ENCODE measurements at regions of chr2 and their contacts with region 1.

Region 1: GRCh38 chr2:26122630-26123029 is 50.3 kb upstream of the GAREM2 start:
- DNase-seq: no peak
- ATAC-seq: peak in 3 of 4 donors; percentile 55 to 60 (median 57)
- H3K4me3 ChIP-seq: no peak overlapping the region
- H3K27ac ChIP-seq: peak overlapping the region in 11 of 12 donors; percentile 3 to 72 (median 39)
- H3K4me1 ChIP-seq: peaks cover 0 to 49% (median 18%) of the 10 kb centered on the region in 12 donors
- H3K27me3 ChIP-seq: no peaks in the 10 kb centered on the region
- CTCF ChIP-seq: no peak
- POLR2A ChIP-seq: no peak

Region 2: DNA sequence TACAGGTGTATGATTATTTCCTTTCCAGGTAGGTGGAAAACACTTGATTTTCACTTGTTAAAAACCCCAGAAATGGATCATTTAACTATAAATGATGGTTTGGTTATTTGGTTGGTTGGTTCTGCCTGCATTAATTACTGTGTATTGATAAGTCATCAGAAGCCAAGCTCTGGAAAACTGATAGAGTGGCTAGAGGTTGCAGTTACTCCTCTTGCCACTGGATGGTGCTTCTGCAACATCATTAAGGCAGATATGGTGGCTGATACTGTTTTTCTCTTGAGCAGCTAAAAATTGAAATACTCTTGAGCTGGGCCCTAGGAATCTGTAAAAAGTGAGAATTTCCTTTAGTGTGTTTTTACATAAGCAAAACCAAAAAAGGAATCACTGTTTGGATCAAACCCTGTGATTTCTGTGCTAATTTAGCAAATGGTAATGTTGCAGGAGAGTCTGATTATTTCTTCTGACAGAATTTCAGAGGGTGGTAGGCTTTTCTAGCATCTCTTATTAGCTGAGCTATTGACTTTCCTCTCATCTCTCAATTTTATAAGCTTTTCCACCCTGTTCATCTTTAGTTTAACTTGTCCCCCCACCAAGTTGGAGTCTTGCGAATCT is 34.5 kb before region 1 on chr2:
- intact Hi-C with region 1: loop called in 2 of 10 experiments (anchors 5 kb)
- DNase-seq: no peak
- ATAC-seq: peak in 2 of 4 donors; percentile 66 to 74
- H3K4me3 ChIP-seq: no peak overlapping the region
- H3K27ac ChIP-seq: no peak overlapping the region
- H3K4me1 ChIP-seq: peaks cover 0 to 50% (median 4%) of the 10 kb centered on the region in 12 donors
- H3K27me3 ChIP-seq: no peaks in the 10 kb centered on the region
- CTCF ChIP-seq: peak; percentile 50 to 79 (median 68)
- POLR2A ChIP-seq: no peak

Region 3: GRCh38 chr2:26099933-26100332 is 22.7 kb before region 1 on chr2:
- intact Hi-C with region 1: loop called in 1 of 10 experiments (anchors 2 kb)
- DNase-seq: no peak
- ATAC-seq: peak; percentile 72 to 82 (median 81)
- H3K4me3 ChIP-seq: no peak overlapping the region
- H3K27ac ChIP-seq: peak overlapping the region in 11 of 12 donors; percentile 24 to 69 (median 50)
- H3K4me1 ChIP-seq: peaks cover 0 to 41% (median 17%) of the 10 kb centered on the region in 12 donors
- H3K27me3 ChIP-seq: no peaks in the 10 kb centered on the region
- CTCF ChIP-seq: no peak
- POLR2A ChIP-seq: no peak

Region 4: DNA sequence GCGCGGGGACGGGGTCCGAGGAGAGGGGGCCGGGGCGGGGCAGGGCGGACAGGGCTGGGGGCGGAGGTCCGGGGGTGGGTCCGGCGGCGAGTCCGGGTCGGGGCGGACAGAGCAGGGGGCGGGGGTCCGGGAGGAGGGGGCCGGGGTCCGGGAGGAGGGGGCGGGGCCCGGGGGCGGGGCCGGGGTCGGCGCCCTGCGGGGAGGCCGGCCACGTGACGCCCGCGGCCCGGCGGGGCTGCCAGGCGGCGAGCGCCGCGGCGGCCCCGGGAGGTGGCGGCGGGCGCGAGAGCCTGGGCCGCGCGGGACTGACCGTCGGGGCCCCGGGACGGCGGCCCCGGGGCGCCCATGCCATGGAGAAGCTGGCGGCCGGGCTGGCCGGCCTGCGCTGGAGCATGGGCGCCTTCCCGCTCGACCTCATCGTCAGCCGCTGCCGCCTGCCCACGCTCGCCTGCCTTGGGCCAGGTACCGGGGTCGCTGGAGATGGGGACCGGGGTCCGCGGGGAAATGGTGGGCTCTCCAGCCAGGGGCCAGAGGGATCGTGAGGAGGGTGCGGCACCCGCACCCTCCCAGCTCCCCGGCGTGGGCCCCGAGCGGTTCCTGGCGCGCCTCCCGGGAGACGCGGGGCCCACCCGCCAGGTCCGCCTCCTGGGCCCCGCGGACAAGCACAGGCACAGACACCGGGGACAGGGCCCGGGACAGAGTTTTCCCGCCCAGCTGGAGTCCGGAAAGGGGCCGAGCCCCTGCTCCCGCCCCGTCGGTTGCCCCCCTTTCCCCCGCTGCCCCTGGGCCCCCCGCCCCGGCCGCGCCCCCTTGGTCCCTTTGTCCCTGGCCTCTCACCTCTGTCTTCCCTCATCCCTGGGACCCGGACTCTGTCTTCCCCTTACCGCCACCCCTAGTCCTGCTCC is 50.5 kb after region 1 on chr2 and contains the start of gene GAREM2:
- intact Hi-C with region 1: no loop called
- DNase-seq: no peak
- ATAC-seq: no peak
- H3K4me3 ChIP-seq: peak within 1 kb of the TSS in 11 of 12 donors; percentile 19 to 54 (median 44)
- H3K27ac ChIP-seq: no peak within 1 kb of the TSS
- H3K4me1 ChIP-seq: peaks cover 0 to 18% (median 6%) of the 10 kb centered on the region in 12 donors
- H3K27me3 ChIP-seq: peaks cover 8 to 38% (median 24%) of the 10 kb centered on the region in 9 donors
- CTCF ChIP-seq: no peak
- POLR2A ChIP-seq: no peak
- total RNA-seq, gene GAREM2: 0.47 to 4.1 (median 0.83) TPM

Measured in heart left ventricle (tissue), 16 donors.